A549 (cell line): ENCODE measurements at regions of chr2 and their contacts with region 1.

Region 1: GRCh38 chr2:231411831-231412617 is 16.5 kb downstream of the B3GNT7 start:
- DNase-seq: peak; percentile 67 to 84
- ATAC-seq: peak; percentile 97 to 99
- H3K4me3 ChIP-seq: peak overlapping the region; percentile 62
- H3K27ac ChIP-seq: peak overlapping the region; percentile 66 to 92
- H3K4me1 ChIP-seq: peaks cover 4% of the 10 kb centered on the region; the same call in 2 of the 3 replicates
- CTCF ChIP-seq: peak; percentile 96
- EP300 ChIP-seq: no peak
- POLR2A ChIP-seq: peak; percentile 60
- RAD21 ChIP-seq: peak; percentile 92 to 95

Region 2: DNA sequence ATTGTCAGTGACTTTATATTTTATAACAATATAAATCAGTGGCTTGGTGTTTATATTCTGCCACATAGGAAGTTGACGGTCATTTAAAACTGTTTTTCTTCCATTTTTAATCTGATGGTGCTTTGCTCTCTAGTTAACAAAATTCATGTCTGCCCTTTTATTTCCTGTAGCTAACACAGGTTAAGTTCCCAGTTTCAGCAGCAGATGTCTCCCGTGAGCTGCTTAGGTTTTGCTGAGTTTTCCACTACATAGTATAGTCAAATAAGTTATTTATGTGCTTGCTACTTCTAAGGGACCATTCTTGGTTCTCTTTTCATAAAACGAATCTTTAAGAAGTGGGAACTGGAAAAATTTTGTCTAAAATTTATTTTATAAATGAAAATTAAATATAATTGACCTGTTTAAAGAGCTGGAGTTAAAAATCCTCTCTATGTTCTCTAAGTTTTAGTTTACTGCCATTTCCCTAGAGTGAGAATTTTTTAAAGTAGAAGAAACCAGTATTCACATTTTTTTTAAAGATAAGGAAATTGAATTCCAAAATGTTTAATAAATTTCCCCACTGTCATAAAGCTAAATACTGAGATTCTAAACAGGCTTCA is 307.8 kb before region 1 on chr2:
- CTCF ChIA-PET with region 1: interaction called, 22 read pairs
- POLR2A ChIA-PET with region 1: no interaction called
- DNase-seq: peak; percentile 21 to 55
- ATAC-seq: peak; percentile 84 to 89; a peak in 5 of 6 replicates
- H3K4me3 ChIP-seq: no peak overlapping the region
- H3K27ac ChIP-seq: no peak overlapping the region
- H3K4me1 ChIP-seq: peaks cover 42% of the 10 kb centered on the region
- CTCF ChIP-seq: peak; percentile 90
- EP300 ChIP-seq: no peak
- POLR2A ChIP-seq: no peak
- RAD21 ChIP-seq: peak; percentile 76 to 77

Region 3: GRCh38 chr2:231138699-231139098 is 273.3 kb before region 1 on chr2:
- CTCF ChIA-PET with region 1: no interaction called
- POLR2A ChIA-PET with region 1: no interaction called
- DNase-seq: no peak
- ATAC-seq: no peak
- H3K4me3 ChIP-seq: no peak overlapping the region
- H3K27ac ChIP-seq: no peak overlapping the region
- H3K4me1 ChIP-seq: peaks cover 16% of the 10 kb centered on the region
- CTCF ChIP-seq: no peak
- EP300 ChIP-seq: no peak
- POLR2A ChIP-seq: no peak
- RAD21 ChIP-seq: no peak

Region 4: DNA sequence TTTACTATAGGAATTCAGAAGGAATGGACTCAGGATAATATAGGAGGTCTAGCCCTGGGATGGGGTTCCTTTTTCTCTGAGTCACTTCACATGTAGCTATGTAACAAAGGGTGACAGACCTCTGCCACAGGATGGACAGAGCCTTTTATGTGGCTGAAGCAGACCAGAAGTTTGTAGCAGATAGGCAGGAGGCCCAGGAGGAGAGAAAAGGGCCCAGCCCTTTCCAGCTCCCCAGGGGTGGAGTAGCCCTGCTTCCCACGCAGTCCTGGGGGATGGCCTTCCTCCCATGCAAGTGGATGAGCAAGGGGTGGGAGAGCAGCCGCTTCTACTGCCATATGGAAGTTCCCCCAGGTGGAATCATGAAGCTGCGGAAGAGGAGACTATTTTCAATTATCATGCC is 173.3 kb before region 1 on chr2:
- CTCF ChIA-PET with region 1: interaction called, 17 read pairs
- POLR2A ChIA-PET with region 1: no interaction called
- DNase-seq: no peak
- ATAC-seq: no peak
- H3K4me3 ChIP-seq: no peak overlapping the region
- H3K27ac ChIP-seq: no peak overlapping the region
- H3K4me1 ChIP-seq: no peaks in the 10 kb centered on the region
- CTCF ChIP-seq: no peak
- EP300 ChIP-seq: no peak
- POLR2A ChIP-seq: no peak
- RAD21 ChIP-seq: no peak

Region 5: DNA sequence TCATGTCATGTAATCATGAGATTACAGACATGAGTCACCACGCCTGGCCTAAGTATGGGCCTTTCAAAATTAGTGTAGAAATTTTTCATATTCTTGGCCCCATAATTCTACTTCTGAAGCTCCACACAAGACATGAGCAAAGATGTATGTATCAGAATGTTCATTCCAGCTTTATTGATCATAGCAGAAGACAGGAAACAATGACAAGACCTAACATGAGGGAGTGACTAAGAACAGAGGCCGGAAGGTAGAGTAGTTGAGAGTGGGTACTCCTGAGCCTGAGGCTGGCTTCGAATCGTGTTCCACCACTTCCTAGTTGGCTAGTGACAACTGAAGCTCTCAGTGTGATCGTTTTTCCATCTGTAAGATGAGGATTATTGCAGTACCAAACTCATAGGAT is 124.3 kb before region 1 on chr2:
- CTCF ChIA-PET with region 1: interaction called, 294 read pairs
- POLR2A ChIA-PET with region 1: no interaction called
- DNase-seq: no peak
- ATAC-seq: no peak
- H3K4me3 ChIP-seq: no peak overlapping the region
- H3K27ac ChIP-seq: no peak overlapping the region
- H3K4me1 ChIP-seq: no peaks in the 10 kb centered on the region
- CTCF ChIP-seq: no peak
- EP300 ChIP-seq: no peak
- POLR2A ChIP-seq: no peak
- RAD21 ChIP-seq: no peak

Region 6: GRCh38 chr2:231361671-231362554 is 50.1 kb before region 1 on chr2:
- CTCF ChIA-PET with region 1: interaction called, 16 read pairs
- POLR2A ChIA-PET with region 1: no interaction called
- DNase-seq: no peak
- ATAC-seq: peak; percentile 46 to 55; a peak in 5 of 6 replicates
- H3K4me3 ChIP-seq: no peak overlapping the region
- H3K27ac ChIP-seq: peak overlapping the region; percentile 46 to 68; a peak in 3 of 6 replicates
- H3K4me1 ChIP-seq: peaks cover 18% of the 10 kb centered on the region
- CTCF ChIP-seq: no peak
- EP300 ChIP-seq: no peak
- POLR2A ChIP-seq: no peak
- RAD21 ChIP-seq: no peak

Region 7: DNA sequence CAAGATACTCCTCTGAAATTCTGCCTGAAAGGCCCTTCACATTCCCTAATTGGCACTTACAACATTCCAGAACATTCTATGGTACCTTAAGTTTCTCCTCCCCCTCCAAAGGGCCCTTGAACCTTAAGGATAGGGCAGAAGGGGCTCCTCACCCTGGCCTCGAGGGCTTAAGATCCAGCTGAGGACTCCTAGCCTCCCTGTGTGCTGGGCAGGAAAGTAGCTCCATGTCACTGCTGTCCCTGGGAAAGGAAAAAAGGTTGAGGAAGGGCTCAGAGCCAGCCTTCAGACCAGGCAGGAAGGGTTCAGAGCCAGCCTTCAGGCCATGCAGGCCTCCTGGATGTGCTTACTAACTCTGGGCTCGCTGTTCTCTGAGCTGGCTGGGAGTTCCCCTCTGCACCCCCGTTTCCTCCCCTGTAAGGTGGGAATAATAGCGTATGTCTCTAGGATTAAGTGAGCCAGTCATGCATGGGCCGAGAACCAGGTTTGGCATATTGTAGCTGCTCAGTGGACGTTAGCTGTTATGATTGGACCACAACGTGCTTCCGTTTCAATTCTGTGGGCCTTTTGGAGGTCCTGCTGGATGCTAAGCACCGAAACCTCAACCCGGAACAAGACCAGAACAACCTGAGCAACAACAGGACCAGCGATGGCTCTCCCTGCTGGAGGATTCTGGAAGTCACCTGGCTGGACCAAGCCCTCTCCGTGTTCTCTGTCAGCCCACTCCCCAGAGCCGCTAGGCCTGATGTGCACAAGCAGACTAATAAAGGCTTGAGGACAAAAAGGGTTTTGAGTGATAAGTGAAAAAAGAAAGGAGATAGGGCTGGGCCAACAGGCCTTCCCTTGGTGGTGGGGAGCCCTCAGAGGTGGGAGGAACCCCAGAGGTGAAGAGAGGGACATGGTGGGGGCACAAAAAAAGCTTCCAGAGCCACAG is 17.5 kb before region 1 on chr2:
- CTCF ChIA-PET with region 1: interaction called, 141 read pairs
- POLR2A ChIA-PET with region 1: no interaction called
- DNase-seq: peak in 1 of 2 experiments; percentile 34
- ATAC-seq: peak in 1 of 2 experiments; percentile 42; a peak in 3 of 6 replicates
- H3K4me3 ChIP-seq: peak overlapping the region; percentile 73; the same call in 2 of the 3 replicates
- H3K27ac ChIP-seq: peak overlapping the region; percentile 83 to 86; a peak in 4 of 6 replicates
- H3K4me1 ChIP-seq: peaks cover 6% of the 10 kb centered on the region
- CTCF ChIP-seq: 0 out of 3 replicates have a peak, but pooled peaks have one; percentile 21
- EP300 ChIP-seq: no peak
- POLR2A ChIP-seq: no peak
- RAD21 ChIP-seq: no peak

Region 8: DNA sequence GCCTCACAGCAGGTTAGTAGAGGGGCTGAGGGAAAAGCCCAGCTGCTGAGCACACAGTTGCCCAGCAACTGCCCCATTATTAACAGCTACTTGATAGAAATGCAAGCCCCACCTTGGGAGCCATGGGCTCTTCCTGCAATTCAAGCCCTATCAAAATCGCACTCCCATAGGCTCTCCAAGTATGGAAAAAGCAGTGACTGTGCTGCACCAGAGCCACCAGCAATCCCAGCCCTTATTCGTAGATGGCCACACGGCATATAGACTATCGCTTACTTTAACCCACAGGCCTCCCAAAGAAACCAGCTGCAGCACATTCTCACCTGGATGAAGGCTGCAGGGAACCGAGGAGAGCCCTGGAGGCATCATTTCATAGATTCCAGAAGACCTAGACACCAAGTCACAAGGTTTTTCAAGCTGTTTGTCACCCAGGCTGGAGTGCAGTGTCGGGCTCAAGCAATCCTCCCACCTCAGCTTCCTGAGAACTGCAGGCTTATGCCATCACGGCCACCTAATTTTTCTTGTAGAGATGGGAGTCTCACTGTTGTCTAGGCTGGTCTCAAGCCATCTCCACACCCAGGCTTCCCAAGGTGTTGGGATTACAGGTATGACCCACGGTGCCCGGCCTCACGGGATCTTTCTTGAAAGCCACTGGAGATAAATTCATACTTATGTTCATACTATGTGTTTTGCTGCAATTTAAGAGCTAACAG is 40.9 kb after region 1 on chr2:
- CTCF ChIA-PET with region 1: interaction called, 19 read pairs
- POLR2A ChIA-PET with region 1: interaction called, 3 read pairs
- DNase-seq: peak in 1 of 2 experiments; percentile 23
- ATAC-seq: peak; percentile 13 to 38
- H3K4me3 ChIP-seq: no peak overlapping the region
- H3K27ac ChIP-seq: no peak overlapping the region
- H3K4me1 ChIP-seq: no peaks in the 10 kb centered on the region
- CTCF ChIP-seq: no peak
- EP300 ChIP-seq: no peak
- POLR2A ChIP-seq: no peak
- RAD21 ChIP-seq: no peak

Region 9: GRCh38 chr2:231662028-231662810 is 250.2 kb after region 1 on chr2:
- CTCF ChIA-PET with region 1: no interaction called
- POLR2A ChIA-PET with region 1: no interaction called
- DNase-seq: peak; percentile 69 to 99
- ATAC-seq: peak; percentile 48 to 72
- H3K4me3 ChIP-seq: peak overlapping the region; percentile 40
- H3K27ac ChIP-seq: peak overlapping the region; percentile 88 to 100
- H3K4me1 ChIP-seq: peaks cover 20% of the 10 kb centered on the region
- CTCF ChIP-seq: no peak; the same call in 2 of the 3 replicates
- EP300 ChIP-seq: no peak
- POLR2A ChIP-seq: peak; percentile 51
- RAD21 ChIP-seq: 0 out of 5 replicates have a peak, but pooled peaks of 1 of the 2 experiments have one; percentile 34